ENCODE measurements at regions of chr1 and their contacts with region 1.

Region 1: GRCh38 chr1:9724706-9725476 is 73.4 kb downstream of the PIK3CD start:
- DNase-seq: peak in 8 of 10 donors; percentile 33 to 90 (median 58)

Region 2: DNA sequence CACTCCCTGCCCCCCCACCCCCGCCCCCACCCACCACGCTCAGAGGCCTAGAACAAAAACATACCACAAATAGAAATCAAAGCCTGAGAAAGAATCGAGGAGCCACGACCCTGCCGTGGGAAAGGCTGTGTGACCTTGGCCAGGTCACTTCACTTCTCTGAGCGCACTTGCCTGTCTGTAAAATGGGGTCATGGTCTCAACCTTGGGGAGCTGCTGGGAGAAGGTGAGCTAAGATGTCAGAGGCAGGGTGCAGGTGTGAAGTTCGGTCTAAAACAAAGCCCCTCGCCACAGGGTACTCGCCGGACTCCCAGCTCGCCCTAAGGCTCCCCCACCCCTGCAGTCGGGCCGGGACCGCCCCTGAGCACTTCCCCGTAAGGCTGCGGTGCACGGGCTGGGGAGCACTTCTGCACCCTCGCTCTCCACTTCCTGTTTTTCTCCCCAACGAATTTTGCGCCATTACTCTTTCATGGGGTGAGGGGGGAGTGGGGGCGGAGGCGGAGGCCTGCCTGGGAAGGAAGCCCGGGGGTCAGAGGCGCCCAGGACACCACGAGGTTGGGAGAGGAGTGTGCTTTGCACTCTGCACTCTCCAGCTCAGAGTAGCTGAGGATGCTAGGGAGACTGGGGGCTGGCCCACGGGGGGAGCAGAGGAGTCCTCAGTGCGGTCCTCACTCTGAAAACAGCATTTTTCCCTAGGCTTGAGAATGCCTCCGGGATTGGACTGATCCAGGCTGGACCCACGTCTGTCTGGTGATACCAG is 95.3 kb before region 1 on chr1:
- intact Hi-C with region 1: loop called (anchors 5 kb)
- DNase-seq: peak in 2 of 10 donors; percentile 23 to 27

Measured in posterior cingulate gyrus (tissue), 11 donors.